ENCODE measurements at regions of chr15 and their contacts with region 1.

Region 1: GRCh38 chr15:80925597-80926059 is 64.0 kb downstream of the MESD start:
- DNase-seq: no peak
- H3K4me3 ChIP-seq: no peak overlapping the region
- H3K27me3 ChIP-seq: no peaks in the 10 kb centered on the region
- CTCF ChIP-seq: no peak

Region 2: DNA sequence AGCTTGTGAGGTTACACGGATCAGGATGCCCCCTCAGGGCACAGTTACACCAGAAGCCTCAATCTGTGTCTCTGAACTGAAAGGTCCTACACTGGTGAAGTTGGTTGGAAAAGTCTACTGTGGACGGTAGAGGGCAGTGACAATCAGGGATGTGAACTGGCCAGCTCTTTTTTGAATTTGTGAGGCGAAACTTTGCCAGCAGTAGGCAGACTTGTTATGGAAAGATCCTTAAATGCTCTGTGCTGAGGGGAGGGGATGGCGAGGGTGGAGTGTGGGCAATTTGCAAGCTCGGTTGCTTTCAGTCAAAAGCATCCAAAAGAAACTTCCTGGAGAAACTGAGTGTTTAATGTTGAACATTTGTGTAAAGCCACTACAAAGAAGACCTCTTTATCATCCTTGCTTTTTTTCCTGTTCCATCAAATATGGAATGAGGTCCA is 357.9 kb before region 1 on chr15:
- CTCF ChIA-PET with region 1: no interaction called
- POLR2A ChIA-PET with region 1: no interaction called
- DNase-seq: peak; percentile 73
- H3K4me3 ChIP-seq: no peak overlapping the region
- H3K27me3 ChIP-seq: no peaks in the 10 kb centered on the region
- CTCF ChIP-seq: peak; percentile 94

Region 3: DNA sequence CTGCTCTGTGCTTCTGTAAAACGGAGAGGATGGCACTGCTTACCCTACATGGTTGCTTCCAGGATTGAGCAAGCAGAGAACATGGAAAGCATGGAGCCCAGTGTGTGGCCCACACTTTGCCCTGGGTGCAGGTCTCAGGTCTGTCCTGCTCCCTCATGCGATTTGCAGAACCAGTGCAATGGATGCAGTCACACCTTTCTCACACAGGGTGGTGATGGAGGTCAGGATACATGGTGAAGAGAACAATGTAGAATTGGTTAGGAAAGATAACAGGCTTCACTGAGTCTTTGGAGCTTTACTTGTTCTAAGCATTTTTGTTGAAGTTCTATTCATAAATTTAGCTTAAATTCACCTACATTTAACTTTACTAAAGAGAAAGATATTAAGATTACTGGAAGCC is 14.6 kb before region 1 on chr15:
- CTCF ChIA-PET with region 1: no interaction called
- POLR2A ChIA-PET with region 1: interaction called, 21 read pairs
- DNase-seq: no peak
- H3K4me3 ChIP-seq: no peak overlapping the region
- H3K27me3 ChIP-seq: no peaks in the 10 kb centered on the region
- CTCF ChIP-seq: no peak